ENCODE measurements at regions of chr4 and their contacts with region 1.

Region 1: GRCh38 chr4:39527273-39528060 is at the start of gene UGDH:
- DNase-seq: peak; percentile 93
- ATAC-seq: peak; percentile 99
- H3K4me3 ChIP-seq: peak within 1 kb of the TSS; percentile 46 to 98 (median 72)
- H3K4me3 Mint-ChIP-seq: peak within 1 kb of the TSS; percentile 98
- H3K27ac ChIP-seq: peak within 1 kb of the TSS; percentile 51 to 86
- H3K27ac Mint-ChIP-seq: peak within 1 kb of the TSS; percentile 96
- H3K4me1 ChIP-seq: peaks cover 14 to 15% of the 10 kb centered on the region in 2 donors
- H3K4me1 Mint-ChIP-seq: peaks cover 21% of the 10 kb centered on the region
- H3K27me3 ChIP-seq: no peaks in the 10 kb centered on the region
- H3K27me3 Mint-ChIP-seq: no peaks in the 10 kb centered on the region
- CTCF ChIP-seq: no peak
- total RNA-seq, gene UGDH: 18.5 and 25.4 TPM in 2 replicates

Region 2: GRCh38 chr4:39490322-39490721 is 37.1 kb before region 1 on chr4:
- CTCF ChIA-PET with region 1: no interaction called
- POLR2A ChIA-PET with region 1: no interaction called
- intact Hi-C with region 1: no loop called
- DNase-seq: no peak
- ATAC-seq: no peak
- H3K4me3 ChIP-seq: no peak overlapping the region
- H3K4me3 Mint-ChIP-seq: no peak overlapping the region
- H3K27ac ChIP-seq: no peak overlapping the region
- H3K27ac Mint-ChIP-seq: no peak overlapping the region
- H3K4me1 ChIP-seq: no peaks in the 10 kb centered on the region
- H3K4me1 Mint-ChIP-seq: peaks cover 4% of the 10 kb centered on the region
- H3K27me3 ChIP-seq: peaks cover 0 to 2% (median 0%) of the 10 kb centered on the region in 4 experiments
- H3K27me3 Mint-ChIP-seq: no peaks in the 10 kb centered on the region
- CTCF ChIP-seq: no peak

Region 3: DNA sequence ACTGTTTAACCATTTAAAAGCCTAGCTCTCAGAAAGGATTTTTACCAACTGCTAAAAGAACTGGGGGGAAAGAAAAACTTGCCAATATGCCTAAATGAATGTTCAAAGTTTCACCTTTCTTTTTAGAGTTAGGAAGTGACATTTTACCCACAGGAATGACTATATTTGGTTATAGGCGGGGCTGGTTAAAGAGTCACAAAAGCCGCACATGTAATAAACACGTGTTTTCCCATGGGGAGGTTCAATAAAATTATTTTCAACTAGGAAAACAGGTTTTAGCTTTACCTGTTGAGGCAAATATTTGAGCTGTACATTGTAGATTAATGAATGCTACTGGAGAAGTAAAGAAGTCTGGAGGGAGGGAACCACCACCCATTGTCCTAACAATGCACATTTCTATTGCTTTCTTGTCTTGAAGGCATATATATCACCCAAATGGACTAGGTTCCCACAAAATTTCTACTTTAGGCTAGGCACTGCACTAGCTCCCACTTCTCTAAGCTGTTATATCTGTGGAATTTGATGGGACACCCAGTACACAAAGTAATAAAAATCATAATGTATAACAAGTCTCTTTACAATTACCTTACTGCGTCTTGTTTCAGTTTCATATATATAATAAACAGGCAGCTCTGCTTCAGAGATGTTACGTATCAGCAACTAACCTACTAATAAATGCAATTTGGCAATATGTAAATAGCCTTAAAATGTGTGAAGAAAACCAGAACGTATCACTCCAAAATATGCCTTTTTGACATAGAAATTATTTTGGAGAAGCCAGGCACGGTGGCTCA is 41.5 kb after region 1 on chr4:
- CTCF ChIA-PET with region 1: no interaction called
- POLR2A ChIA-PET with region 1: no interaction called
- intact Hi-C with region 1: loop called (anchors 2 kb)
- DNase-seq: peak; percentile 55
- ATAC-seq: peak; percentile 67
- H3K4me3 ChIP-seq: peak overlapping the region in 4 of 5 experiments; percentile 0 to 19 (median 4)
- H3K4me3 Mint-ChIP-seq: peak overlapping the region; percentile 83
- H3K27ac ChIP-seq: peak overlapping the region; percentile 44 to 75
- H3K27ac Mint-ChIP-seq: peak overlapping the region; percentile 83
- H3K4me1 ChIP-seq: peaks cover 10 to 17% of the 10 kb centered on the region in 2 donors
- H3K4me1 Mint-ChIP-seq: peaks cover 32% of the 10 kb centered on the region
- H3K27me3 ChIP-seq: no peaks in the 10 kb centered on the region
- H3K27me3 Mint-ChIP-seq: no peaks in the 10 kb centered on the region
- CTCF ChIP-seq: no peak

Region 4: GRCh38 chr4:39697740-39698423 is 170.4 kb after region 1 on chr4 and contains the start of gene UBE2K:
- CTCF ChIA-PET with region 1: interaction called, 7 read pairs
- POLR2A ChIA-PET with region 1: no interaction called
- intact Hi-C with region 1: loop called (anchors 1 kb)
- DNase-seq: peak; percentile 94
- ATAC-seq: peak; percentile 92
- H3K4me3 ChIP-seq: peak within 1 kb of the TSS; percentile 74 to 98 (median 96)
- H3K4me3 Mint-ChIP-seq: peak within 1 kb of the TSS; percentile 100
- H3K27ac ChIP-seq: peak within 1 kb of the TSS; percentile 87 to 90
- H3K27ac Mint-ChIP-seq: peak within 1 kb of the TSS; percentile 99
- H3K4me1 ChIP-seq: peaks cover 23 to 29% of the 10 kb centered on the region in 2 donors
- H3K4me1 Mint-ChIP-seq: peaks cover 41% of the 10 kb centered on the region
- H3K27me3 ChIP-seq: no peaks in the 10 kb centered on the region
- H3K27me3 Mint-ChIP-seq: no peaks in the 10 kb centered on the region
- CTCF ChIP-seq: no peak
- total RNA-seq, gene UBE2K: 46.3 and 51.0 TPM in 2 replicates